Sigmoid colon (tissue), 7 donors: ENCODE measurements at regions of chr5 and their contacts with region 1.

Region 1: GRCh38 chr5:73454351-73455036 is 5.9 kb upstream of the FOXD1 start:
- DNase-seq: no peak
- H3K4me3 ChIP-seq: no peak overlapping the region
- H3K27ac ChIP-seq: no peak overlapping the region
- H3K4me1 ChIP-seq: peaks cover 0 to 14% (median 11%) of the 10 kb centered on the region in 4 donors
- H3K27me3 ChIP-seq: peaks cover 35 to 70% (median 58%) of the 10 kb centered on the region in 3 donors
- CTCF ChIP-seq: peak in 3 of 4 experiments; percentile 29 to 58 (median 54)
- EP300 ChIP-seq: no peak
- POLR2A ChIP-seq: no peak

Region 2: DNA sequence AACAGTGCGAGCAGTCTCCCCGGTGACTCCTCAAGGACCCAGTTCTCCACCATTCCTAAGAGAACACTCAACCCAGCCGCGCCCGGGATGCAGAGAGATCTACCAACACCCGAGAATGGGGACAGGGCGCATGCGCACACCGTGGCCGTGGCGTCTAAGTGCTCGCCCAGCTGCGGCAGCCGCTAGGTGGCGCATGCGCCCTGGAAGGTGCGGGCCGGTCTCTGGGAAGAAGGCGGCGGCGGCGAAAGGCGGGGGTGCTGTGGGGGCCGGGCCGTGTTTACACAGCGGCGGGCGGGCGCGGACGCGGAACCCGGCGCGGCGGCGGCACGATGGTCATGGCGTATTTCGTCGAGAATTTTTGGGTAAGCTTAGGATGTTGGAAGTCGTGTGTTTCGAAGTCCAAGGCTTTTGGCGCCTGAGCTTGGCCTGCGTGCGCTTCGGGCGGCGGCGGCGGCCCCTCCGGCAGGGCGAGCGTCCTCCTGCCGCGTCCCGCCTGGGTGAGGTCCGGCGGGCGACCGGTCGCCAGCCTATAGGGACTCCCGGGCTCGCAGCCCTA is 498.6 kb before region 1 on chr5 and contains the start of gene FCHO2:
- intact Hi-C with region 1: loop called (anchors 10 kb)
- DNase-seq: peak; percentile 99
- H3K4me3 ChIP-seq: peak within 1 kb of the TSS; percentile 84 to 92 (median 86)
- H3K27ac ChIP-seq: peak within 1 kb of the TSS; percentile 92 to 98 (median 98)
- H3K4me1 ChIP-seq: peaks cover 0 to 52% (median 31%) of the 10 kb centered on the region in 4 donors
- H3K27me3 ChIP-seq: no peaks in the 10 kb centered on the region
- CTCF ChIP-seq: peak; percentile 82 to 86 (median 84)
- EP300 ChIP-seq: no peak
- POLR2A ChIP-seq: peak; percentile 44 to 51
- total RNA-seq, gene FCHO2: 36.0 to 40.3 (median 38.3) TPM

Region 3: GRCh38 chr5:73081093-73081492 is 373.4 kb before region 1 on chr5:
- intact Hi-C with region 1: loop called (anchors 5 kb)
- DNase-seq: no peak
- H3K4me3 ChIP-seq: no peak overlapping the region
- H3K27ac ChIP-seq: no peak overlapping the region
- H3K4me1 ChIP-seq: no peaks in the 10 kb centered on the region
- H3K27me3 ChIP-seq: no peaks in the 10 kb centered on the region
- CTCF ChIP-seq: no peak
- EP300 ChIP-seq: no peak
- POLR2A ChIP-seq: no peak

Region 4: DNA sequence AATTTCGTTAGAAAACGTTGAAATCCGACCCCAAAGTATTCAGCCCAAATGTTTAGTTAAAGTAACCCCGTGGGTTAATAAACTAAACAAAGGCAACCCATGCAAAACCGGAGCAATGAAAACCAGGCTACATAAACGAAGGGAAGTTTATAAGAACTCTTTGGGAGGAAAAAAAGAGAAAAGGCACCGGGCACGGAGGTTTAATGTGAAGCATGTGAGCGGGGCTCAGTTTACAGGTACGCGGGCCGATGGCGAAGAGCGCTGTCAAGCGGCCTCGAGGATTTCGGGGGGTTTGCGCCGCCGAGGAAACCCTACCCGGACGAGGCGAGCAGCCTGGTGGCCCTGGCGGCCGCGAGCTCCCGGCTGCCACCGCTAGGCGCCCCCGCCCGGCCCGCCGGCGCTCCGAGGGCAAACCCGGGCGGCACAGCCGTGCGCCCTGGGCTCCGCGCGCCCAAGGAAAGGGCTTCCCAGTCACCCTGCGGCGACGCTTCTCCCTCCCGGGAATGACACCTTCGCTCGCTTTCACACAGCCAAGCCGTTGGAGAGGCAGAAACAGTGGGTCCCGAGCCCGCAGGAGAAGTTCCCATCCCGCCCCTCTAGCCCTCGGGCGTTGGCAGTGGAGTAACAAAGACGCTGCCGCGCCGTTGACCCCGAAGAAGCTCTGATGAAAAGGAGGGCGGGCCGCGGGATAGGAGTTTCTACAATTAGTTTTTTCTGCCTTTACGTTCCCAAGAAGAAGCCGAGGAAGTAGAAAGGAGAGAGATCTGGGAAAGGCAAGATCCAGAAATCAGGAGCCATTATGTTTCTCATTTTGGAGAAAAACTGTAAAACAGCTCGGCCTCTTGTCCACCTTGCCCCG is 155.5 kb before region 1 on chr5:
- intact Hi-C with region 1: loop called (anchors 5 kb)
- DNase-seq: no peak
- H3K4me3 ChIP-seq: peak overlapping the region in 2 of 4 donors; percentile 1 to 9
- H3K27ac ChIP-seq: no peak overlapping the region
- H3K4me1 ChIP-seq: peaks cover 0 to 41% (median 33%) of the 10 kb centered on the region in 4 donors
- H3K27me3 ChIP-seq: peaks cover 67 to 92% (median 73%) of the 10 kb centered on the region in 3 donors
- CTCF ChIP-seq: no peak
- EP300 ChIP-seq: no peak
- POLR2A ChIP-seq: no peak

Region 5: DNA sequence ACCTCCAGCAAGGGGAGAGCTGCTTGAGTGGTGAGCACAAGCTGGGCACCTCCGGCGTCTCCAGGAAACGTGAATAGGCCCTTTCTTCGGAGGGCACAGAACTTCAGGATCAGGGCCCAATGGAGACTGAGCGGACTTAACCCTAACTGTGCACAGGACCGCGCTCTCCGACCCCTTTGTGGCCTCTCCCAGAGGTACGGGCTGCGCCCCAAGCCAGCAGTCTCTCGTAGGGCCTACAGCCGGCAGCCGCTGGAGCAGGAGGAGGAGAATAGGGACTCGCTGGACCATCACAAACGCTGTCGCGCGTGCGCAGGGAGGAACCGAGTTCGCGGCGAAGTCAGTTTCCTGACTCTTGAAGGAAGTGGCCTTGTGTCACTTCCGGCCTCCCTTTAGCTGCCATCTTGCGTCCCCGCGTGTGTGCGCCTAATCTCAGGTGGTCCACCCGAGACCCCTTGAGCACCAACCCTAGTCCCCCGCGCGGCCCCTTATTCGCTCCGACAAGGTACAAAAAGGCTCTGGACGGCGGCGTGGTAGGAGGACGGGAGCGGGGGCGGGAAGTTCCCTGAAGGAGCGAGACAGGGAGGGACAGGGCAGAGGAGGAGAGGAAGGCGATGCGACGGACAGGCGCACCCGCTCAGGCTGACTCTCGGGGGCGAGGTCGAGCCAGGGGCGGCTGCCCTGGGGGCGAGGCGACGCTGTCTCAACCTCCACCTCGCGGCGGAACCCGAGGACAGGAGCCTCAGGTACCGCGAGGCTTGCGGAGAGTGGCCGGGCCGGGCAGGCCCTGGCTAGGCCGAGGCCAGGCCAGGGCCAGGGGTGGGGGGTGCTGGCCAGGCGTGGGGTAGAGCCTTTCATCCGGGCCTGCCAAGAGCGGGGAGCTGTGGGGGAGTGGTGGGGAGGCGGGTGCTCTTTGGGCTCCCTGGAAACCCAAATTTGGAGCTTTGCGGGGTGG is 43.8 kb after region 1 on chr5 and contains the start of gene BTF3:
- intact Hi-C with region 1: loop called (anchors 5 kb)
- DNase-seq: peak; percentile 97
- H3K4me3 ChIP-seq: peak within 1 kb of the TSS; percentile 64 to 99 (median 88)
- H3K27ac ChIP-seq: peak within 1 kb of the TSS; percentile 87 to 97 (median 92)
- H3K4me1 ChIP-seq: peaks cover 0 to 29% (median 24%) of the 10 kb centered on the region in 4 donors
- H3K27me3 ChIP-seq: no peaks in the 10 kb centered on the region
- CTCF ChIP-seq: no peak
- EP300 ChIP-seq: no peak
- POLR2A ChIP-seq: peak; percentile 66 to 72
- total RNA-seq, gene BTF3: 490 to 780 (median 726) TPM